Activated CD4-positive, alpha-beta memory T cell treated with anti-CD3 and anti-CD28 coated beads for 36 hours (primary cell): ENCODE measurements at regions of chr2 and their contacts with region 1.

Region 1: DNA sequence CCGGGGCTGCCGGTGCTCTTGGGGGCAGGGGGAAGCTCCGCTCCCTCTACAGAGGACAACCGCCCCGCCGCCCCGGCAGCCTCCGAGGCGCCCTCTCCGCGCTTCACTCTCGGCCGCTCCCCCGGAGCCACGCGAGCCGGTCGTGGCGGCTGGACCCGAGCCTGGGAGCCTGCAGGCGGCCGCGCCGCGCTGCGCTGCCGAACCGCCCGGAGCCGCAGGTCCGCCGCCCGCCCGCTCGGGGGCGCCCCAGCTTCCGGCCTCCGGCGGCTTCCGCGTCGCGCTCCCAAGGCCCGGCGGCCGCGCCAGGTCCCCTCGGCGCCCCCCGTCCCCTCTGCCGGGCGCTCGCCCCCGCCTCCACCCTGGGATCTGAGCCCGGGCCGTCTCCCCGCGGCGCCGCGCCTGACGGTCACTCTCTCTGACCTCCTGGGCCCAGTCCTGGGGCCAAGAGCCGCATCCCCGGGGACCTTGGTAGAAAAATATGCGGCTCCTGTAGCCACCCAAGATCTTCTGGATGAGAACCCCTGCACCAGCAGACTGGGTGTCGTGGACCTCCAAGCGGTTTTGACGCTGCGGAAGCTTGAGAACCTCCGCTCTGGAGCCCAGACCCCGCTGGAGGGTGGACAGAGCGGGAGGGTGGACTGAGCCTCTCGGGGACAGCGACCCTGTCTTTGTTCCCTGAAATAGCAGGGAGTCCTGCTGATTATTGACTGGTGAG is 44.3 kb downstream of the SERTAD2 start:
- DNase-seq: peak; percentile 75
- H3K4me3 Mint-ChIP-seq: peak overlapping the region; percentile 57
- H3K27ac Mint-ChIP-seq: no peak overlapping the region
- H3K4me1 Mint-ChIP-seq: peaks cover 26% of the 10 kb centered on the region
- H3K27me3 Mint-ChIP-seq: no peaks in the 10 kb centered on the region

Region 2: GRCh38 chr2:64404002-64404731 is 205.2 kb before region 1 on chr2:
- CTCF ChIA-PET with region 1: no interaction called
- POLR2A ChIA-PET with region 1: no interaction called
- intact Hi-C with region 1: no loop called
- DNase-seq: no peak
- H3K4me3 Mint-ChIP-seq: no peak overlapping the region
- H3K27ac Mint-ChIP-seq: no peak overlapping the region
- H3K4me1 Mint-ChIP-seq: no peaks in the 10 kb centered on the region
- H3K27me3 Mint-ChIP-seq: peaks cover 2% of the 10 kb centered on the region

Region 3: GRCh38 chr2:64586883-64587481 is 22.4 kb before region 1 on chr2:
- CTCF ChIA-PET with region 1: interaction called, 15 read pairs
- POLR2A ChIA-PET with region 1: interaction called, 4 read pairs
- intact Hi-C with region 1: no loop called
- DNase-seq: no peak
- H3K4me3 Mint-ChIP-seq: no peak overlapping the region
- H3K27ac Mint-ChIP-seq: no peak overlapping the region
- H3K4me1 Mint-ChIP-seq: peaks cover 10% of the 10 kb centered on the region
- H3K27me3 Mint-ChIP-seq: no peaks in the 10 kb centered on the region

Region 4: DNA sequence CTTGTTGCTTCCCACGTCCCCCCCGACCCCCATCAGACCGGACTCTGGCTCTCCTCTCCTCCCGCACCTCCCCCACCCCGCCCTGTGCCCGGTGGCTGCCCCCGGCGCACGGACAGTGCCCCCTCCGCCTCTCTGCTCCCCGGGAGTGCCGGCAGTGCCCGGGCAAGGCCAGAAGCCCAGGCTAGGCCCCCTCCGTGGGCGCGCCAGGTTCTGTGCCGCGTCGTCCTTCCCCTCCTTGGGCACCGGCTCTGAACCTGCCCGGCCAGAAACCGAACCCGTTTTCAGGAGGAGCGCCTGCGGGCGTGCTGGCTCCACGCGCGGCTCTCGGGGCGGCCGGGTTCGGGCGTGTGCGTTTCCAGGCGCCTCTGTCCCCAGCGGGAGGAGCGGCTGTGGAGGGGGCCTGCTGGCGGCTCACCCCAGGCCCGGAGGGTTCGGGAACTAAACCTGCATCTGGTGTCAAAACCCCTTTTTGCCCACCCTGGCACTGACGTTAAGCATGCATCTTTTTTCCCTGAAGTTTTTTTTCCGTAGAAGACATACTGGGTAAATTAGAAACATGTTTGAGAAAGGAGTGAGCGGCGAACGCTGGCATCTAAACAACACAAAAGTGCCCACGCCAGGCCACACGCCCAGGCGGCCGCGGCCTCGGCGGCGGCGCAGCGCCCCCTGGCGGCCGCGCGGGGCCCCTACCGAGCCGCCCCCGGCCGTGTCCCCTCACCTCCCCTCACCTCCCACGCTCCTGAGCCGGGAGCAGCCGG is 255.9 kb after region 1 on chr2:
- CTCF ChIA-PET with region 1: interaction called, 9 read pairs
- POLR2A ChIA-PET with region 1: no interaction called
- intact Hi-C with region 1: loop called (anchors 5 kb)
- DNase-seq: peak; percentile 72
- H3K4me3 Mint-ChIP-seq: peak overlapping the region; percentile 57
- H3K27ac Mint-ChIP-seq: no peak overlapping the region
- H3K4me1 Mint-ChIP-seq: no peaks in the 10 kb centered on the region
- H3K27me3 Mint-ChIP-seq: peaks cover 5% of the 10 kb centered on the region

Region 5: DNA sequence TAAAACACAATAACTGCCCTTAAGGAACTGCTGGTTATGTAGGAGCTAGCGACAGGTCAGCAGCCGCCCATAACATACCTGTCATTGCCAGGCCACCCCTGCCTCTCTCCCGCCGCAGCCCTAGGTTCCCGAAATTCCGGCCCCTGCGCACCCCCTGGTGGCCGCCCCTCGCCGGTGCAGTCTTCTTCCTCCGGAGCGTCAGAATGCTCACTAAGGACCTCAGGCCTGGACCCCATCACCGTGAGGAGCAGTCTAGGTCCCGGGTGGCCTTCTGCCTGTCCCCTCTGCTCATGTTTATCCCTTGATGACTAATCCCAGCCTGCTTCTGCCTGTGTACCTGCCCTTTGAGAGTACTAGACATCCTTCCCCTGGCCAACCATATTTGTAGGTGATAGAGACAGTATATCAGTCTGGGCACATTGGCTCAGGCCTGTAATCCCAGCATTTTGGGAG is 264.1 kb after region 1 on chr2:
- CTCF ChIA-PET with region 1: interaction called, 11 read pairs
- POLR2A ChIA-PET with region 1: no interaction called
- intact Hi-C with region 1: loop called (anchors 5 kb)
- DNase-seq: peak; percentile 89
- H3K4me3 Mint-ChIP-seq: peak overlapping the region; percentile 23
- H3K27ac Mint-ChIP-seq: no peak overlapping the region
- H3K4me1 Mint-ChIP-seq: peaks cover 7% of the 10 kb centered on the region
- H3K27me3 Mint-ChIP-seq: peaks cover 2% of the 10 kb centered on the region

Region 6: GRCh38 chr2:65227425-65228262 is 618.3 kb after region 1 on chr2 and contains the start of gene ACTR2:
- CTCF ChIA-PET with region 1: no interaction called
- POLR2A ChIA-PET with region 1: no interaction called
- intact Hi-C with region 1: loop called (anchors 5 kb)
- DNase-seq: peak; percentile 97
- H3K4me3 Mint-ChIP-seq: peak within 1 kb of the TSS; percentile 100
- H3K27ac Mint-ChIP-seq: peak within 1 kb of the TSS; percentile 99
- H3K4me1 Mint-ChIP-seq: peaks cover 32% of the 10 kb centered on the region
- H3K27me3 Mint-ChIP-seq: no peaks in the 10 kb centered on the region
- total RNA-seq, gene ACTR2: 401 to 406 TPM